ENCODE measurements at regions of chr10 and their contacts with region 1.

Region 1: GRCh38 chr10:91163269-91163868 is 57.1 kb upstream of the PCGF5 start:
- DNase-seq: peak; percentile 68 to 94 (median 86)
- ATAC-seq: peak; percentile 74
- H3K4me3 ChIP-seq: peak overlapping the region; percentile 74 to 80
- H3K4me3 Mint-ChIP-seq: peak overlapping the region; percentile 93
- H3K27ac ChIP-seq: peak overlapping the region; percentile 91 to 93
- H3K27ac Mint-ChIP-seq: peak overlapping the region; percentile 99
- H3K4me1 ChIP-seq: peaks cover 22% of the 10 kb centered on the region
- H3K4me1 Mint-ChIP-seq: peaks cover 62% of the 10 kb centered on the region
- H3K27me3 ChIP-seq: no peaks in the 10 kb centered on the region
- H3K27me3 Mint-ChIP-seq: no peaks in the 10 kb centered on the region
- CTCF ChIP-seq: no peak

Region 2: GRCh38 chr10:90871766-90872647 is 291.4 kb before region 1 on chr10 and contains the start of gene RPP30:
- CTCF ChIA-PET with region 1: no interaction called
- POLR2A ChIA-PET with region 1: interaction called, 3 read pairs
- intact Hi-C with region 1: loop called in 1 of 2 experiments (anchors 10 kb)
- DNase-seq: peak; percentile 65 to 84 (median 79)
- ATAC-seq: peak; percentile 99
- H3K4me3 ChIP-seq: peak within 1 kb of the TSS; percentile 73 to 95
- H3K4me3 Mint-ChIP-seq: peak within 1 kb of the TSS; percentile 97
- H3K27ac ChIP-seq: peak within 1 kb of the TSS; percentile 34 to 58
- H3K27ac Mint-ChIP-seq: peak within 1 kb of the TSS; percentile 88
- H3K4me1 ChIP-seq: peaks cover 18% of the 10 kb centered on the region
- H3K4me1 Mint-ChIP-seq: peaks cover 40% of the 10 kb centered on the region
- H3K27me3 ChIP-seq: no peaks in the 10 kb centered on the region
- H3K27me3 Mint-ChIP-seq: peaks cover 20% of the 10 kb centered on the region
- CTCF ChIP-seq: no peak
- total RNA-seq, gene RPP30: 29.7 TPM

Region 3: GRCh38 chr10:91185239-91185875 is 22.0 kb after region 1 on chr10:
- CTCF ChIA-PET with region 1: no interaction called
- POLR2A ChIA-PET with region 1: interaction called, 4 read pairs
- intact Hi-C with region 1: loop called in 1 of 2 experiments (anchors 2 kb)
- DNase-seq: no peak
- ATAC-seq: no peak
- H3K4me3 ChIP-seq: no peak overlapping the region
- H3K4me3 Mint-ChIP-seq: no peak overlapping the region
- H3K27ac ChIP-seq: no peak overlapping the region
- H3K27ac Mint-ChIP-seq: peak overlapping the region; percentile 16
- H3K4me1 ChIP-seq: peaks cover 32% of the 10 kb centered on the region
- H3K4me1 Mint-ChIP-seq: peaks cover 88% of the 10 kb centered on the region
- H3K27me3 ChIP-seq: no peaks in the 10 kb centered on the region
- H3K27me3 Mint-ChIP-seq: no peaks in the 10 kb centered on the region
- CTCF ChIP-seq: no peak

Region 4: DNA sequence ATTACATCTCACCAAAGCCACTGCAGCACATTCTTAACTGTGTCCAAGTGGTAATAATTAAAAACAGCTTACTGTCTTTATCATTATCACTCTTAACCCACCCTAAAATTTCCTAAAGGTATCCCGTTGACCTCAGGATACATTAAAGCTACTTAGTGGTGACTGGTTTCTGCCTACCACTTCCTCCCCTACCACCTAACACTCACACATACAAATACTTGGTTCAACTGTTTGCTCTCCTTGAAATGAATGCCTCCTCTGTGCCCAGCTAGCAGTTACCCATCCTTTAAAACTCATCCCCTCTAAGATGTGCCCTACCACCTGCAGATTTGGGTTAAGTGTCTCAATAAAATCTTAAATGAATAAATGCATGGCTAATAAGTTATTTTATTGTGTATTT is 64.2 kb after region 1 on chr10:
- CTCF ChIA-PET with region 1: no interaction called
- POLR2A ChIA-PET with region 1: interaction called, 37 read pairs
- intact Hi-C with region 1: no loop called
- DNase-seq: no peak
- ATAC-seq: peak; percentile 31
- H3K4me3 ChIP-seq: no peak overlapping the region
- H3K4me3 Mint-ChIP-seq: no peak overlapping the region
- H3K27ac ChIP-seq: no peak overlapping the region
- H3K27ac Mint-ChIP-seq: peak overlapping the region; percentile 15
- H3K4me1 ChIP-seq: peaks cover 15% of the 10 kb centered on the region
- H3K4me1 Mint-ChIP-seq: peaks cover 56% of the 10 kb centered on the region
- H3K27me3 ChIP-seq: no peaks in the 10 kb centered on the region
- H3K27me3 Mint-ChIP-seq: no peaks in the 10 kb centered on the region
- CTCF ChIP-seq: no peak

Region 5: GRCh38 chr10:91797874-91798648 is 634.7 kb after region 1 on chr10 and contains the start of gene TNKS2:
- CTCF ChIA-PET with region 1: no interaction called
- POLR2A ChIA-PET with region 1: interaction called, 4 read pairs
- intact Hi-C with region 1: loop called in 1 of 2 experiments (anchors 2 kb)
- DNase-seq: peak; percentile 83 to 96 (median 92)
- ATAC-seq: peak; percentile 69
- H3K4me3 ChIP-seq: peak within 1 kb of the TSS; percentile 81 to 85
- H3K4me3 Mint-ChIP-seq: peak within 1 kb of the TSS; percentile 99
- H3K27ac ChIP-seq: peak within 1 kb of the TSS; percentile 88 to 91
- H3K27ac Mint-ChIP-seq: peak within 1 kb of the TSS; percentile 99
- H3K4me1 ChIP-seq: peaks cover 35% of the 10 kb centered on the region
- H3K4me1 Mint-ChIP-seq: peaks cover 64% of the 10 kb centered on the region
- H3K27me3 ChIP-seq: no peaks in the 10 kb centered on the region
- H3K27me3 Mint-ChIP-seq: no peaks in the 10 kb centered on the region
- CTCF ChIP-seq: no peak
- total RNA-seq, gene TNKS2: 46.4 to 49.4 TPM

Region 6: DNA sequence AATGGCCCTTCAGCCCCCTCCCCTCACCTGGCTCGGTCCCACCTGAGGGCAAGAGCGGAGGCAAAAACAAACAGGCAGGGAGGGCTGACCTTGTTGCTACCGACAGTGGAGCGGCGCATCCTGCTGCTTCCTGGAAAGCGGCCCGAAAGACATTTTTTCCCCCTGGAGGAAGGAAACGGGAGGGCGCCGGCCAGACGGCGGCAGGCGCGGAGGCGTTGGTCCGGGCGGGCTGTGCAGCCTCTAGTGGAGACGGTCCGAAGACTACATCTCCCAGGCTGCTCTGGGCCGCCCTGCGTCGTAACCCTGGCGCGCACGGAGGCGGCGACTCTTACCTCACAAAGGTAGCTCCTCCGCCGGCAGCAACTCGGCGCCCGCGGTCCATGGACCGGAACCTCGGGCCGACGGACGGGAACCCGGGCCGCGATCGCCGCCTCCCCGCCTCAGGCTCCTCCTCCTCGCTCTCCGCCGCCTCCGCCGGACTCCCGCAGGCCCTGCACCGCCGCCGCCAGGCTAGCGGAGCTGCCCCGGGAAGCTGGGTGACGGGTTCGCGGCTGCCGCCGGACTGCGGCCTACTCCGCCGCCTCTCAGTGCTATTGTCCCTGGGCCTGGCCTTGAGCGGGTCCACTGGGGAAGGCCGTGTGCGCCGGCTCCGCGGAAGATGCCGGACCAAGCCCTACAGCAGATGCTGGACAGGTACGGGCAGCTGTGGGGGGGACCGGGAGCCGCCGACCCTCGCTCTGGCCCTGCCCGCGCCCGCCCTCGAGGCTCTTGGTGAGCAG is 1127.7 kb after region 1 on chr10 and contains the starts of genes CPEB3 and MARCHF5:
- CTCF ChIA-PET with region 1: no interaction called
- POLR2A ChIA-PET with region 1: no interaction called
- intact Hi-C with region 1: loop called in 1 of 2 experiments (anchors 2 kb)
- DNase-seq: peak; percentile 78 to 96 (median 90)
- ATAC-seq: peak; percentile 97
- H3K4me3 ChIP-seq: peak within 1 kb of the TSS; percentile 91 to 98
- H3K4me3 Mint-ChIP-seq: peak within 1 kb of the TSS; percentile 97
- H3K27ac ChIP-seq: peak within 1 kb of the TSS; percentile 70 to 83
- H3K27ac Mint-ChIP-seq: peak within 1 kb of the TSS; percentile 88
- H3K4me1 ChIP-seq: peaks cover 20% of the 10 kb centered on the region
- H3K4me1 Mint-ChIP-seq: peaks cover 36% of the 10 kb centered on the region
- H3K27me3 ChIP-seq: no peaks in the 10 kb centered on the region
- H3K27me3 Mint-ChIP-seq: no peaks in the 10 kb centered on the region
- CTCF ChIP-seq: peak; percentile 50
- total RNA-seq, gene CPEB3: 0.71 to 1.1 TPM
- total RNA-seq, gene MARCHF5: 48.3 to 48.9 TPM

Measured in CD8-positive, alpha-beta T cell (primary cell).